Posterior vena cava (tissue), 2 donors: ENCODE measurements at regions of chr6 and their contacts with region 1.

Region 1: GRCh38 chr6:50785921-50786320 is 32.8 kb upstream of the TFAP2B start:
- DNase-seq: no peak

Region 2: DNA sequence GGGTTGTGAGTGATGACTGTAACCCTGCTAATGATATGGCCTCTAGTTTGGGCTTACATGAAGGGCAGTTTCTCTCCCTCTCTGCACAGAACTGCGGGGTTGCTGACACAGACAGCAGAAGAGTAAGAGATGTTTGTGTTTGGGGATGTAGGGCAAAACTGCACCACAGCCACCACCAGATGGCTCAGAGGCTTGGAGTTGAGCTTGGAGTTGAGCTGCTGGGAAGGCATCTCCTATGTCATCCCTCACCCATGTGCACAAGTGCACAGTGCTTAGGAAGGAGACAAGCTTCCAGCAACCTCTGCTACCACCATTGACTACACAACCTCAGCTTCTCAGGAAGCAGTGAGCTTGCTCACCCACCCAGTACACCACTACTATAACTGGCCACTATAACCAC is 432.3 kb before region 1 on chr6:
- intact Hi-C with region 1: loop called in 1 of 2 experiments (anchors 5 kb)
- DNase-seq: no peak